CD8-positive, alpha-beta T cell (primary cell): ENCODE measurements at regions of chr9 and their contacts with region 1.

Region 1: DNA sequence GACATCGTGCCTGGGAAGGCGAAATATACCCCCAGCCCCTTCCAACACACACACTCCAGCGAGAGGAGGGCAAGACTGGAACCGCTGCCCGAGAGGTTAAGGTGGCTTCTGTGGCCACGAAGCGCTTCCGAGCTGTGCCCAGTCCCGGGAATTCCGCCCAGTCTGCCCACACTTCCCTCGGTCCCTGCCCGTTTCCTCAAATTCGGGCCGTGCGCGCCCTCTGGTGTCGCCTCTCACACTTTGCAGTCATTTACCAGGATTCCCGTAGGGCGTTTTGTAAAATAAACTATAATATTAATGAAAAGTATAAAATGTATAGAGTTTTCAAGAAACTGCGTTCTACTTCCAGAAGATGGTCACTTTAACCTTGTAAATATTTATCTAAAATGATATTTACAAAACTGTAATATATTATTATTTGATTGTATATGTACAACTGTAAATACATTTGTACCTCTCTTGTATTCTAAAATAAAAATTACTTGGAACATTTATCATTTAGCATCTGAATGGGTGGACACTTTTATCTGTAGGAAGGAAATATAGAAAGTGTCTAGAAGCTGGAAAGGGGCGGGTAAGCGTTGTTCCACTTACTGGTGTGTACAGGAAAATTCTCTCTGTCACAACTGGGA is 11.0 kb upstream of the EXOSC2 start:
- DNase-seq: peak in 8 of 9 experiments; percentile 42 to 74 (median 60)
- ATAC-seq: peak; percentile 37
- H3K4me3 ChIP-seq: peak overlapping the region; percentile 61 to 63
- H3K4me3 Mint-ChIP-seq: peak overlapping the region; percentile 92
- H3K27ac ChIP-seq: no peak overlapping the region
- H3K27ac Mint-ChIP-seq: no peak overlapping the region
- H3K4me1 ChIP-seq: peaks cover 8% of the 10 kb centered on the region
- H3K4me1 Mint-ChIP-seq: peaks cover 2% of the 10 kb centered on the region
- H3K27me3 ChIP-seq: peaks cover 5 to 7% of the 10 kb centered on the region in 2 experiments
- H3K27me3 Mint-ChIP-seq: peaks cover 13% of the 10 kb centered on the region
- CTCF ChIP-seq: peak; percentile 88

Region 2: GRCh38 chr9:130461218-130461630 is 221.4 kb before region 1 on chr9:
- CTCF ChIA-PET with region 1: interaction called, 101 read pairs
- POLR2A ChIA-PET with region 1: interaction called, 4 read pairs
- intact Hi-C with region 1: loop called in 1 of 2 experiments (anchors 1 kb)
- DNase-seq: peak; percentile 48 to 86 (median 71)
- ATAC-seq: peak; percentile 65
- H3K4me3 ChIP-seq: no peak overlapping the region
- H3K4me3 Mint-ChIP-seq: no peak overlapping the region
- H3K27ac ChIP-seq: no peak overlapping the region
- H3K27ac Mint-ChIP-seq: no peak overlapping the region
- H3K4me1 ChIP-seq: no peaks in the 10 kb centered on the region
- H3K4me1 Mint-ChIP-seq: no peaks in the 10 kb centered on the region
- H3K27me3 ChIP-seq: no peaks in the 10 kb centered on the region
- H3K27me3 Mint-ChIP-seq: peaks cover 24% of the 10 kb centered on the region
- CTCF ChIP-seq: peak; percentile 82

Region 3: DNA sequence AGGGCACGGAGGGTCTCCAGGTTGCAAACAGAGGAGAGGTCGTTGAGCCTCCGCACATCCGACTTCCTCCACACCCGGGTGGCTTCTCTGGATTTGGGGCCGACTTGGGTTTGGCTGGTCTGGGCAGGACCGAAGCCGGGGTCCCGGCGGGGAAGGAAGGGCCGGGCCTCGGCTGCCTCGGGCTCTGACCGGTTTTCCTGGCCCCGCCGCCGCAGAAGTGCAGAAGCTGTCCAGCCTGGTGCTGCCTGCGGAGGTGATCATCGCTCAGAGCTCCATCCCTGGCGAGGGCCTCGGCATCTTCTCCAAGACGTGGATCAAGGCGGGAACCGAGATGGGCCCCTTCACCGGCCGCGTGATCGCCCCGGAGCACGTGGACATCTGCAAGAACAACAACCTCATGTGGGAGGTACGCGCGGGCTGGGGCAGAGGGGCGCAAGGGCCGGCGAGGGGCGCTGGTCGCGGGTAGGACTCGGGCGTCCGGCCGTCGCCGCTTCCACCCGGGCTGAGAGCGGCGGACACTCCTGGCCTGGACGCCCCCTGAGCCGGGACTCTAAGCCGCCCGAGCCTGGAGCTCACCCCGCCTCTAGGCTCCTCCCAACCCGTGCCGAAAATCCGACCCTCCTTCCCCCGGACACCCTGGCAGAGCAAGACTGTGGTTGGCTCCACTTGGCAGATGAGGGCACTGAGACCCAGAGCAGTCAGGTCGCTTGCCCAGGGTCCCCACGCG is 16.1 kb before region 1 on chr9:
- CTCF ChIA-PET with region 1: interaction called, 12 read pairs
- POLR2A ChIA-PET with region 1: no interaction called
- intact Hi-C with region 1: no loop called
- DNase-seq: no peak
- ATAC-seq: no peak
- H3K4me3 ChIP-seq: no peak overlapping the region
- H3K4me3 Mint-ChIP-seq: no peak overlapping the region
- H3K27ac ChIP-seq: no peak overlapping the region
- H3K27ac Mint-ChIP-seq: no peak overlapping the region
- H3K4me1 ChIP-seq: peaks cover 35% of the 10 kb centered on the region
- H3K4me1 Mint-ChIP-seq: peaks cover 23% of the 10 kb centered on the region
- H3K27me3 ChIP-seq: peaks cover 28 to 33% of the 10 kb centered on the region in 2 experiments
- H3K27me3 Mint-ChIP-seq: peaks cover 43% of the 10 kb centered on the region
- CTCF ChIP-seq: no peak

Region 4: DNA sequence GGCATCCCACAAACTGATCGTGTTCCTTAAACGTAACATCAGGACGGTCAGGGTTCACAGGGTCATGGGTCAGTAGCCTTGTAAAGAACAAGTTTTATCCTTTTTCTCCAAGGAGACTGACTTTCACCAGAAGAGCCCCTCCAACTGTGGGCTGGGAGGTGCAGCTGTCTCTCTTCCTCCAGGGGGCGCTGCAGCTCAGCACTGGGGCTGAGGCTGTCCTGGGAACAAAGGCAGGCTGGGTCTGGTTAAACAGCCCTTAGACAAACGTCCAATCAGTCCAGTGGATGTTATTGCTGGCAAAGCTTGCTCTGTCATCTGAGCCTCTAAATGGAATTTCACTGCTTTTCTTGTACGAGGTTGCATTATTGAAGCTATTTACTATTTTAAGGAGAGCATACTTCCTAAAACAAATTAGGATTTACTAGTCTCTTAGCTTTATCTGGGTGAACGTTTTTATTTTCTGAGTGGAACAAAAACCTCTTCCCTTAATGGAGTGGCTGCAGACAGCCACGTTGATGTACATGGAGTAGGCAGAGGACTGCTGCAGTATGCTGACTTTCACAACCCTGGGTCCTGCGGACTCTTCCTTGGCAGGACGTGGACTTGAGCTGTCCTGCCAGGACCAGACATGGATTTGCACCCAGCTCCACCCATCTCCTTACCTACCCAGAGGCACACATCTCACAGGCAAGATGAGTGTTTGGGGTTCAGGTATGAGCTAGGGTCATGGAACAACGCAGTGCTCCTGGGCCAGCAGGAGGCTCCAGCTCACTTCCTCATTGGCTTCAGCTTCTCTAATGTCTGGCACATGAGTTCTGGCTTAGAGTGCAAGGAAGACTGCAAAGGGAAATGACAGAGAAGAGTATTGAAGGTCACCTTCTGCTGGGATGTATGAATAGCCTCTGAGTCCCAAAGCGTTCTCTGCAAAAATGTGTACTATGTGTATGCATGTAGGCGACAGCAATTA is 18.7 kb after region 1 on chr9:
- CTCF ChIA-PET with region 1: interaction called, 29 read pairs
- POLR2A ChIA-PET with region 1: no interaction called
- intact Hi-C with region 1: no loop called
- DNase-seq: peak; percentile 44 to 80 (median 72)
- ATAC-seq: peak; percentile 95
- H3K4me3 ChIP-seq: no peak overlapping the region
- H3K4me3 Mint-ChIP-seq: no peak overlapping the region
- H3K27ac ChIP-seq: no peak overlapping the region
- H3K27ac Mint-ChIP-seq: no peak overlapping the region
- H3K4me1 ChIP-seq: no peaks in the 10 kb centered on the region
- H3K4me1 Mint-ChIP-seq: peaks cover 18% of the 10 kb centered on the region
- H3K27me3 ChIP-seq: no peaks in the 10 kb centered on the region
- H3K27me3 Mint-ChIP-seq: no peaks in the 10 kb centered on the region
- CTCF ChIP-seq: peak; percentile 87

Region 5: DNA sequence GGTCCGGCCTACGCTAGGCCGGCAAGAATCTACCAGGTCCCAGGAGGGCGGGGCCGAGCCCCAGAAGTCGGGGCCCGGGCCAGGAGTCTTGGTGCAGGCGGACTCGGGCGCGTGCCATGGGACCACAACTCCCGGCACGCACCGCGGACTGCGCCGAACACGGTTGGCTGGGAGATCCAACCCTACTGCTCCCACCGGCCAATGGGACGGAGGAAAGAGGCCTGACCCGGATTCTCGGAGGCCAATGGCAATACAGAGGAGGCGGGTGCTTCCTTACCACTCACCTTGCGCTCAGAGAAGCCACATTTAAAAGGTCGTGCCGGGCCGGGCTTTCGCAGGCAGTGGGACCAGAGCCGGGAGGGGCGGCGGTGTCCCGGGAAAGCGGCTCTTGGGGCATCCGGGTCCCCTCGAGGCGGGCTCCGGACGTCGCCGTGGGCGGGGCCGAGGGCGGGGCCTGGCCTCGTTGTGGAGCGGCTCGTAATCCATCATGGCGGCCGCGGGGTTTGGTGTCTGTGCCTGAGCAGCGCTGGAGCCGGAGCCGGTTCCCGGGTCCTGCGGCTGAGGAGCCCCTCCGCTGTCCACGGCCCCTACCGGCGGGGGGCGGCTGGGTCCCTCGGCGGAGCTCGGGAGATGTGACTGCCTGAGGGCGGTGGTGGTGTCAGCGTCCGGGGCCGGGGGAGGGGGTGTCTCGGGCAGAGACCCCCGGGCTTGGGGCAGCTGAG is 30.1 kb after region 1 on chr9:
- CTCF ChIA-PET with region 1: interaction called, 21 read pairs
- POLR2A ChIA-PET with region 1: no interaction called
- intact Hi-C with region 1: loop called in 1 of 2 experiments (anchors 1 kb)
- DNase-seq: peak; percentile 87 to 97 (median 95)
- ATAC-seq: peak; percentile 96
- H3K4me3 ChIP-seq: peak overlapping the region; percentile 81 to 92
- H3K4me3 Mint-ChIP-seq: peak overlapping the region; percentile 92
- H3K27ac ChIP-seq: peak overlapping the region; percentile 87 to 97
- H3K27ac Mint-ChIP-seq: peak overlapping the region; percentile 94
- H3K4me1 ChIP-seq: peaks cover 31% of the 10 kb centered on the region
- H3K4me1 Mint-ChIP-seq: peaks cover 36% of the 10 kb centered on the region
- H3K27me3 ChIP-seq: no peaks in the 10 kb centered on the region
- H3K27me3 Mint-ChIP-seq: no peaks in the 10 kb centered on the region
- CTCF ChIP-seq: no peak